ENCODE measurements at regions of chr22 and their contacts with region 1.

Region 1: DNA sequence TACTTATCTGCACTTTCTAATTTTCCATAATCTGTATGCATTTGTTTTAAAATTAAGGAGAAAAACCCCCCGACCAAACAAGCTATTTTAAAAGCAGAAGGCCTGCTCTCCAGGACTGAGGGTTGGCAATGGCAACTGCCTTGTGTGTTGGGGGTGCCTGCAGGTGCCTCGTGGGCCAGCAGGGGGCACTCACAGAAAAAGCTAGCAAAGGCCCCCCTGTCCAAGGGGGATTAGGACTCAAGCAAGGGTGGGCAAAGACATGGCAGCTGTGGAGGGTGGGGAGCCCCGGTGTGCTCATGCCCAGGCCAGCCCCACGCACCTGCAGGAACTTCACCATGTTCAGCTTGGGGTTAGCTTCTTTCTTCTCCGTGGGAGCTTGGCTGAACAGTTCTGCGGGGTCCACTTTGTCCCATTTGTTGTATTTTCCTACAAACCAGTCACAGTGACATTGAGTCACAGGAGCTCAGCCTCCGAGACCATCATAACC is 10.3 kb downstream of the TOP3B start:
- DNase-seq: no peak
- H3K4me3 ChIP-seq: no peak overlapping the region
- H3K27ac ChIP-seq: no peak overlapping the region
- H3K4me1 ChIP-seq: peaks cover 5% of the 10 kb centered on the region
- H3K27me3 ChIP-seq: no peaks in the 10 kb centered on the region
- CTCF ChIP-seq: peak; percentile 73 to 85

Region 2: DNA sequence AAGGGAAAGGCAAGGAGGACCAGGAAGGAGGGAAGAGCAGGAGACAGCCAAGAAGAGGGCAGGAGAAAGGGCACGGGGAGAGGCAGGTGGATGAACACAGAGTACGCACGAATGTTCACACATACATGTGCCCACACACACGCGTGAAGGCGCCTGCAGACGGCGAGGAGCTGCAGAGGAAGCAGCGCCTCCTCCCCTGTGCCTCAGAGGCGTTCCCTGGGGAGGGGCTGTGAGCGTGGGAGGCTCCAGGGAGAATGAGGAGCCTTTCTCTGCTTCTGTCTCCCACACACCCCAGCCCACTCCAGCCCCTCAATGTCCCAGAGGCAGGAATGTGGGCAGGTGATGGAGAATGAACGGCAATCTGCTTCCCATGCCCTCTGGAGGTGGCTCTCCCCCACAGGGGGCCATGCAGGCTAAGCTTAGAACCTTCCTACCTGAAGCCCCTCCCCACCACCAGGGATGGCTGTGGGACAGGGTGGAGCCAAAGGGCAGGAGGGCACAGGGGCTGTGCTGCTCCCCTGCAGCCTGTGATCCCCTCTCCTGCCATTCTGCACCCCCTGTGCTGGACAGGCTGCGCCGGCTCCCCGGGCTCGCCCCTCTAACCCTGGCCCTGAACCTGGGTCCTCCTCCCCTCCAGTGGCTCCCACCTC is 45.0 kb before region 1 on chr22:
- CTCF ChIA-PET with region 1: no interaction called
- dilution Hi-C with region 1: loop called (anchors 5 kb)
- in situ Hi-C with region 1: no loop called
- intact Hi-C with region 1: no loop called
- DNase-seq: no peak
- H3K4me3 ChIP-seq: no peak overlapping the region
- H3K27ac ChIP-seq: no peak overlapping the region
- H3K4me1 ChIP-seq: no peaks in the 10 kb centered on the region
- H3K27me3 ChIP-seq: no peaks in the 10 kb centered on the region
- CTCF ChIP-seq: no peak

Region 3: DNA sequence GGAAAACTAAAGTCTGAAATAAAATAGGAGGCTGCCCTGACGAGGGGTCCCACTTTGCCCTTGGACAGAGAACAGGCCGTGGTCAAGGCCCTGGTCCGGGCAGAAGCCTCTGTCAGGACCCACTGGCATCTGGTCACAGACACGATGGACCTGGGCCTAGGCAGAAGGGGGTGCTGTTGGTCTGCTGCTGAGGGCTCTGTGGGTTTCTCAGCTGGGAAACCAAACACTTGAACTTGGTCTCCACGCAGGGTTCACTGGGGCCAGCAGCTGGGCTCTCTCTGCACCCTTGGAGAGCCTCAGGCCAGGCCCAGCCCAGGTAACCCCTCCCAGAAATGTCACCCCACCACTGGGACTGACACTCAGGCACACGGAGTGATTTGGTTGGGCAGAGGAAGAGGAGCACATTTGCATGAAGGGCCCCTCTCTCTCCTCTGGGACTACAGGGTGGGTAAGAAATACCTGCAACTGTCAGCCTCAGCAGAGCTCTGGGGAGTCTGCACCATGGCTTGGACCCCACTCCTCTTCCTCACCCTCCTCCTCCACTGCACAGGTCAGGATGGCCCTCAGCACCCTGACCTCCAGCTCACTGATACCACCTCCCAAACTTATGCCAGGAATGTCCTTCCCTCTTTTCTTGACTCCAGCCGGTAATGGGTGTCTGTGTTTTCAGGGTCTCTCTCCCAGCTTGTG is 58.3 kb after region 1 on chr22:
- CTCF ChIA-PET with region 1: no interaction called
- dilution Hi-C with region 1: loop called (anchors 5 kb)
- in situ Hi-C with region 1: no loop called
- intact Hi-C with region 1: no loop called
- DNase-seq: no peak
- H3K4me3 ChIP-seq: no peak overlapping the region
- H3K27ac ChIP-seq: no peak overlapping the region
- H3K4me1 ChIP-seq: no peaks in the 10 kb centered on the region
- H3K27me3 ChIP-seq: no peaks in the 10 kb centered on the region
- CTCF ChIP-seq: peak; percentile 36 to 47

Region 4: DNA sequence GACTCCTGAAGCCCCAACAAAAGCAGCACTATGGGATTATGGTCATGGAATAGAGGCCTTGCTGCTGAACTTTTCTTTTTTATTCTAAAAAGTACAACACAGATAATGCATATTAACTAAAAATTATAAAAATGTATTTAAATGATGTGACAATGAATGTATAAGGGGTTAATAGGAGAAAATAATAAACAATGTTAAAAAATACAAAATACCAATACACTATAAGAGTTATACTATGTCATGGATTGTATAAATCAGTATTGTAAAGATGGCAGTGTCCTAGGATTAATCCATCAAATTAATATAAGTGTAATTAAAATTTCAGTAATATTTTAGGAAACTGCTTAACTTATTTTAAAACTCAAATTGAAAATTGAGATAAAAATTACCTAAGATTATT is 68.6 kb after region 1 on chr22:
- CTCF ChIA-PET with region 1: no interaction called
- dilution Hi-C with region 1: no loop called
- in situ Hi-C with region 1: no loop called
- intact Hi-C with region 1: no loop called
- DNase-seq: no peak
- H3K4me3 ChIP-seq: no peak overlapping the region
- H3K27ac ChIP-seq: no peak overlapping the region
- H3K4me1 ChIP-seq: no peaks in the 10 kb centered on the region
- H3K27me3 ChIP-seq: no peaks in the 10 kb centered on the region
- CTCF ChIP-seq: no peak

Measured in mammary epithelial cell (primary cell).